Natural killer cell (primary cell): ENCODE measurements at regions of chr7 and their contacts with region 1.

Region 1: DNA sequence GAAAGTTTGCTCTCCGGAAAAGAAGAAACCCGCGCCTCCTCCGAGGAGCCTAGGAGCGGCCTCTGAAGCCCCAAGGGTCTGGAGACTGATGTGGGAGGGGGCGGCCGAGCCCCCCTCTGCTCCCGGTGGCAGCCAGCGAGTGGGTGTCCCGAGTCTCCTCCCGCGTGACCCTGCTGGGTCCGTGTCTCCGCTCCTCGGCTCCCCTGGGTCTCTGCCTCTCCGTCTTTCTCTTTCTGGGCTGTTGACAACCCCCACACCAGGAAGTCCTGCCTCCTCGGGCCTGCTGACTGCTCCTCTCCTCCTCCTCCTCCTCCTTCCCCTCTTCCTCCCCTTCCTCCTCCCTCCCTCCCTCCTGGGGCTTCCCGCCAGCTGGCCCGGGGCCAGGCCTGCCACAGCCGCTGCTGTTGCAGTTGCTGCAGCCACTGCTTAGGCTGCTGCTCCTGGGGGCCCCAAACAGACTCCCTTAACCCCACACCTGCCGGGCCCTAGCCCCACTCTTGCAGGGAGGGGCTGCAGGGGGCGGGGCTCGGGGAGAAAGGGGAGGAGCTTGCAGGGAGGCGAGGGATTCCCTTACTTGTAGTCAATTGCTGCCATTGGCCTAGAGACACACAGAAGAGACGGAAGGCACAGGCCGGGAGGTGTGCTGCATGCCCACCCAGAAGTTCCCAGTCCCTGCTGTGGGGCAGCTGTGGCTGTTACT is at the start of gene TSC22D4:
- DNase-seq: peak; percentile 73 to 95
- ATAC-seq: peak; percentile 81 to 89 (median 82)
- H3K4me3 ChIP-seq: peak within 1 kb of the TSS; percentile 61
- H3K4me3 Mint-ChIP-seq: peak within 1 kb of the TSS; percentile 96
- H3K27ac ChIP-seq: peak within 1 kb of the TSS; percentile 43
- H3K27ac Mint-ChIP-seq: peak within 1 kb of the TSS; percentile 80 to 90
- H3K4me1 ChIP-seq: peaks cover 49% of the 10 kb centered on the region
- H3K4me1 Mint-ChIP-seq: peaks cover 24 to 39% of the 10 kb centered on the region in 2 donors
- H3K27me3 ChIP-seq: no peaks in the 10 kb centered on the region
- H3K27me3 Mint-ChIP-seq: peaks cover 0 to 2% of the 10 kb centered on the region in 2 donors
- CTCF ChIP-seq: no peak
- total RNA-seq, gene TSC22D4: 140 to 173 (median 168) TPM

Region 2: DNA sequence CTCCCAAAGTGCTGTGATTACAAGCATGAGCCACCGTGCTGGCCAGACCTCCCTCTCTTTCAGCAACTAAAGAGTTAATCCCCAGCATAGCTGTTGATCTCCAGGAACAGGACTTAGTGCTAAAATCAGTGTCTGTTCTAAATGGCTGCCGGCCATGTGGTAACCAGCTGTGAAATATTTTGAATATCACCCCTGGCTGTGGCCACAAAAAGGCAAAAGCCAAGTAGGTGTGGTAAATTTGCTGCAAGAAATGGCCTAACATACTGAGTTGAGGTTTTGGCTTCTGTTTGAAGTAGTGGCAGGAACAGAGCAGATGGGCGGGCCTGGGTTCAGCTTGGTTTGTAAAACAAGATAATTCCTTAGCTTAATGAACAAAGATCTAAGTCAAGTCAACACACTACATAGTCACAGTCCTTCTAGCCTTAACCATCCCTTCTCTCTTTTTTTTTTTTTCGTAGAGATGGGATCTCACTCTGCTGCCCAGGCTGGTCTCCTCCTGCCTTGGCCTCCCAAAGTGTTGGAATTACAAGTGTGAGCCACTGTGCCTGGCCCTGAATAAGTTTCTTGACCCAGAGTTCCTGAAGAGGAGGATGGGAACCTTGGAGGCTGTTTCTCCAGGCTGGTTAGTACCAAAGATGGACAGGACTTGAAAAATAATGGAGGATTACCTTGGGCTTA is 37.2 kb after region 1 on chr7:
- intact Hi-C with region 1: no loop called
- DNase-seq: peak; percentile 49 to 80
- ATAC-seq: peak; percentile 85 to 98 (median 90)
- H3K4me3 ChIP-seq: no peak overlapping the region
- H3K4me3 Mint-ChIP-seq: peak overlapping the region; percentile 67
- H3K27ac ChIP-seq: no peak overlapping the region
- H3K27ac Mint-ChIP-seq: peak overlapping the region; percentile 32 to 76
- H3K4me1 ChIP-seq: peaks cover 25% of the 10 kb centered on the region
- H3K4me1 Mint-ChIP-seq: peaks cover 15 to 21% of the 10 kb centered on the region in 2 donors
- H3K27me3 ChIP-seq: no peaks in the 10 kb centered on the region
- H3K27me3 Mint-ChIP-seq: peaks cover 12 to 15% of the 10 kb centered on the region in 2 donors
- CTCF ChIP-seq: no peak

Region 3: DNA sequence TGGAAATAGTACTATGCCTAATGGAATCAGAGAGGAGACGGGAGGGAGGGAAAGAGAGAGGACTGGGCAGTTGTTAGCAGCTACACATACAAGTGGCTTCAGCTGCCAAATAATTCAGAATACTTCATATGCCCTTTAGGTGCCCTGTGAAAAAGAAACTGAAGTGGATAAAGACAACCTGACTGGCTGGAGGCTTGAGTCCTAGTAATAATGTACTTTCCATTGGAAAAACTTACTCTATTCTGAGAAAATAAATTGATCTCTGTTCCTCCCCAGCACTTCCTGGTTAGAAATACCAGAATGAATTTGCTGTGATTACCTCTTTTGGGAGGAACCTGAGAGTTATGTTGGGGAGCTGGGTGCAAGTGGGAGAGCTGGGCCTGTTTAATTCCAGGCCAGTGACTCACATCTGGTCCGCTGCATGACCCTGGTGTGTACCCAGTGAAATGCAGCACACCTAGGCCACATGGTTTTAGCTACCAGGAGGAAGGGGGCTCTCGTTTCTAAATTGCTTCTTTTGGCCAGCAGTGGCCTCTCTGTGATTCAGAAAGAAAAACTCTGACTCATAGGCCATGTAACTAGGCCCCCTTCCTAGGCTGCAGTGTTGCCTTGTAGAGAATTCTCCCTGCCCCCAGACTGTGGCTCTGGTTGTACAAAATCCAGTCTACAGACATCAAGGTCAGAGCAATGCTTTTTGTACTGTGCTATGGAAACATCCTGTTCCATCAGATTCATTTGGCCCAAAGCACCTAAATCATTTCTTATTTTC is 66.4 kb after region 1 on chr7:
- intact Hi-C with region 1: loop called (anchors 5 kb)
- DNase-seq: peak in 1 of 2 donors; percentile 59
- ATAC-seq: peak; percentile 28 to 72 (median 55)
- H3K4me3 ChIP-seq: no peak overlapping the region
- H3K4me3 Mint-ChIP-seq: peak overlapping the region; percentile 88
- H3K27ac ChIP-seq: peak overlapping the region; percentile 76
- H3K27ac Mint-ChIP-seq: peak overlapping the region; percentile 94 to 95
- H3K4me1 ChIP-seq: peaks cover 80% of the 10 kb centered on the region
- H3K4me1 Mint-ChIP-seq: peaks cover 80 to 85% of the 10 kb centered on the region in 2 donors
- H3K27me3 ChIP-seq: no peaks in the 10 kb centered on the region
- H3K27me3 Mint-ChIP-seq: no peaks in the 10 kb centered on the region
- CTCF ChIP-seq: no peak

Region 4: GRCh38 chr7:100691676-100692577 is 212.8 kb after region 1 on chr7:
- intact Hi-C with region 1: loop called (anchors 10 kb)
- DNase-seq: peak; percentile 73 to 90
- ATAC-seq: peak; percentile 64 to 75 (median 65)
- H3K4me3 ChIP-seq: no peak overlapping the region
- H3K4me3 Mint-ChIP-seq: peak overlapping the region; percentile 96
- H3K27ac ChIP-seq: no peak overlapping the region
- H3K27ac Mint-ChIP-seq: peak overlapping the region; percentile 84 to 94
- H3K4me1 ChIP-seq: peaks cover 46% of the 10 kb centered on the region
- H3K4me1 Mint-ChIP-seq: peaks cover 25 to 32% of the 10 kb centered on the region in 2 donors
- H3K27me3 ChIP-seq: no peaks in the 10 kb centered on the region
- H3K27me3 Mint-ChIP-seq: no peaks in the 10 kb centered on the region
- CTCF ChIP-seq: peak; percentile 82

Region 5: DNA sequence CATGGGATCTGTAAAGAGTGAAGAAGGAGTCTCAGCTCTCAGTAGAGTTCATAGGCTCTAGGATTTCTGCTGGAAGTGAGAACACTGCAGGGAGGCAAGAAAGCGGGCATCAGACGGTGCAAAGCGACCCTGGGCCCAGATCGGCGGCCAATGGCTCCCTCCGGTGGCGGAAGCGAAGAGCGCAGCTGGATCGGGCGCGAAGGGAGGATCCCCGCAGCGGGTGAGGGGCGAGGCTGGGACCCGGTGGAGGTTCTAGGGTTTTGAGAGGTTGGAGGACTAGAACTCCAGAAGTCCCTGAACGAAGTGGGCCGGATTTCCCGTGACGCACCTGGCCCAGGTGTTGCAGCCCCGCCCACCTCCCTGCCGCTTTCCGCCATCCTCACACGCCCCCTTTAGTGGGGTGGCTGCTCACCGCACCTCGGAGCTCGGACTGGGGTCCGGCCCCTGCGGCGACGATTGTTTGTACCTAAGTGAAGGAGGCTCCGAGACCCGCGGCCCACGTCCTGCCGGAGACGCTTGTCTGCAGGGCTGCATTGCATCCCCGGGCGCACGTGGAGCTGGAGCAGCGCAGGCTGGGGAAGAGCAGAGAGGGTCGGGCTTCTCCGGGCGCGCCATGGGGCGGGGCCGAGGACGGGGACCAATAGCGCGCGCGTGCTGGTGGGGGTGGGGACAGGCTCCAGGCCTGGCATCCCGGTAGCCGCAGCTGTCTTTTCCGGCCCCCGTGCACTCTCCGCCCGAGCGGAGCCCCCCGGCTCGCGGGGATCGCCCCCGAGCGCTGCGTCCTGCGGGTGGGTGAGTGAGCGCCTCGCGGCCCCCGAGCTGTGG is 373.1 kb after region 1 on chr7 and contains the start of gene SLC12A9:
- intact Hi-C with region 1: loop called (anchors 10 kb)
- DNase-seq: peak; percentile 71 to 91
- ATAC-seq: peak; percentile 90 to 94 (median 92)
- H3K4me3 ChIP-seq: peak within 1 kb of the TSS; percentile 71
- H3K4me3 Mint-ChIP-seq: peak within 1 kb of the TSS; percentile 97
- H3K27ac ChIP-seq: peak within 1 kb of the TSS; percentile 59
- H3K27ac Mint-ChIP-seq: peak within 1 kb of the TSS; percentile 71 to 87
- H3K4me1 ChIP-seq: peaks cover 28% of the 10 kb centered on the region
- H3K4me1 Mint-ChIP-seq: peaks cover 8 to 31% of the 10 kb centered on the region in 2 donors
- H3K27me3 ChIP-seq: no peaks in the 10 kb centered on the region
- H3K27me3 Mint-ChIP-seq: peaks cover 0 to 3% of the 10 kb centered on the region in 2 donors
- CTCF ChIP-seq: peak; percentile 98
- total RNA-seq, gene SLC12A9: 35.0 to 44.2 (median 38.1) TPM